Head of caudate nucleus (tissue), 42 donors: ENCODE measurements at regions of chr9 and their contacts with region 1.

Region 1: GRCh38 chr9:2241836-2242741 is 226.9 kb downstream of the SMARCA2 start:
- DNase-seq: peak; percentile 82 to 97 (median 91)

Region 2: DNA sequence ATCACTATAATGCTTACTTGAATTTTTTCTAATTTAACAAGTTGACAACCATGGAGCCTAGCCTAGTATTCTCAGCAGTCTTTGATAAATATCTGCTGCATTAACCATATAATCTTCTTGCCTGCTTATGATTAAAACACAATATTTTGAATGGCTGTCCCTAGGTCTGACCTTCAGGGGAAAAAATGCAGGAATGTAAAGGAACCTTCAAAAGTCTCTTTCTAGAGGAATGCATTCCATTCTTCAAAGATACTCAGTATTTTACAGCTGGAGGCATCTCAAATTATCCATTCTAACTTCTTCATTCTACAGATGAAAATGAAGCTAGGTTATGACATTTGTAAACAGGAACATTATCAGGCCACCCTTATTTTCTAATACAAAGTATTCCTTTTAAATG is 346.1 kb before region 1 on chr9:
- intact Hi-C with region 1: no loop called
- DNase-seq: no peak

Region 3: GRCh38 chr9:2620919-2621679 is 379.0 kb after region 1 on chr9:
- intact Hi-C with region 1: loop called (anchors 5 kb)
- DNase-seq: peak; percentile 71 to 94 (median 85)

Region 4: DNA sequence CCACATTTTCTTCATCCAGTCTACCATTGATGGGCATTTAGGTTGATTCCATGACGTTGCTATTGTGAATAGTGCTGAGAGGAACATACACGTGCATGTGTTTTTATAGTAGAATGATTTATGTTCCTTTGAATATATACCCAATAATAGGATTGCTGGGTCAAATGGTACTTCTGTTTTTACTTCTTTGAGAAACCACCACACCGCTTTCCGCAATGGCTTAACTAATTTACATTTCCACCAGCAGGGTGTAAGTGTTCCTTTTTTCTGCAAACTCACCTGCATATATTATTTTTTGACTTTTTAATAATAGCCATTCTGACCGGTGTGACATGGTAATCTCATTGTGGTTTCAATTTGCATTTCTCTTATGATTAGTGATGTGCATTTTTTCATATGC is 1365.9 kb after region 1 on chr9:
- intact Hi-C with region 1: no loop called
- DNase-seq: no peak